ENCODE measurements at regions of chr4 and their contacts with region 1.

Region 1: GRCh38 chr4:2761035-2761923 is 5.1 kb upstream of the TNIP2 start:
- DNase-seq: peak; percentile 61
- ATAC-seq: no peak

Region 2: GRCh38 chr4:2843263-2843940 is 82.1 kb after region 1 on chr4 and contains the start of gene ADD1:
- intact Hi-C with region 1: loop called in 1 of 2 experiments (anchors 10 kb)
- DNase-seq: peak; percentile 91
- ATAC-seq: peak; percentile 98 to 99
- total RNA-seq, gene ADD1: 200 to 209 TPM

Region 3: DNA sequence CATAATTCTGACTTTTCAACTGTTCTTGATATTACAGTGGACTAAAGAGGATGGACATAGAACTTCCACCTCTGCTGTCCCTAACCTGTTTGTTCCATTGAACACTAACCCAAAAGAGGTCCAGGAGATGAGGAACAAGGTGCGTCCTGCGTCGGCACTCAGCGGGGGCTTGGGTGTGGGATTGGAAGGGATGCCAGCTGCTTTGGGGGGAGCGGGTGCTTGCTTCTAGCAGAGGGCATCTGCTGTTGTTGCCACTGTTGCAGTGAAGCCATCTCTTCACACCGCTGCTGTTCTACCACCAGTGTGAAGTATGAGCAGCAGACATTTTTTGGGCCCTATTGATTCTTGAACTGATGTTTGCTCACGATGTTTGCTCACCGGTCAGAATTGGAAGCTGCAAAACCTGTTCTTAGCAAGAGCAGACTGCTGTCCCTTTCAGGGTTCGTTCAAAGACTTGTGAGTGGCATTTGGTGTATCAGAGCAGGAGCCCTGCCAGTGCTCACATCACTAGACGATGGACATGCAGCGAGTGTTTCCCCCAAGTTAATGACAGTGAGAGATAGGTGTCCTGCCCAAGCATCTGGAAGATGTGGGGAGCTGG is 146.5 kb after region 1 on chr4:
- intact Hi-C with region 1: loop called in 1 of 2 experiments (anchors 10 kb)
- DNase-seq: no peak
- ATAC-seq: no peak

Region 4: DNA sequence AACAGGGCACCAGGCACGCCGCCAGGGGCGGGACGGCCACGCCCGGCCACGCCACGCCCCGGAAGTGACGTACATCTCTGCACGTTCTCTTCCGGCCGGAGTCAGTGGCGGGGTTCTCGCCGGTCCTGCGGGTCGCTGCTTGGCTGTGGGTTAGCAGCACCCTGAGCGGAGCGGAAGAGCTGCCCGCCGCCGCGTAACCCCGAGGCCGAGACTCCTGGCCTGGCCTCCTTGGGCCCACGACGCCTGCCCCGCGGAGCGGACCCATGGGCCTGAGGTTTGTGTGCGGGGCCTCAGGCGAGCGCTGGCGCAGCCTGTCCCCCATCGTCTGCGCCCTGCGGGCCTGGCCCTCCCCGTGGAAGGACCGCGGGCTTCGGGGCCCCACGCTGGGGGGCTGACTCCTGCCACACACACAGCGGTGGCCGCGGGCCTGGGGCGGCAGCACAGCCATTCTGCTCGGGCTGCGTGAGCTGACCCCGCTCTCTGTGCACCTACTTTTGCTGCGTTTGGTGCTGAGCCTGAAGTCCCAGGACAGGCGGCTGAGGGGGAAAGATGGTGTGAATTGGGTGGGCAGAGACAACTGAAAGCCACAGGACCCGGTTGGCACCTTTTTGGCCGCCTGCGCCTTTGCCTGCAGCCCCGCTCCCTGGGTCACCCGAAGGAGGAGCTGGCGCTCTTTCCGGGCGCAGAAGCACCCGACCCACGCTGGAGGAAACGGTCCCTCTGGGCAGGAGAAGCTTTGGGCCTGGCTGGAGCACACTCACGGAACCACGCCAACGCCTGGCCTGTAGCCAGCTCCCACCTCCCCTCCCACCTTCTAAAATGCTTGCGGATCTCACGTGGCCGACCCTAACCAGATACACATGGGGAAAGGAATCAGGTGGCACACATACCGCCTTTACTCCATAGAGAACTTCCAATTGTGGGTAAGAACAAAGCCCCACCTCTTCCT is 173.8 kb after region 1 on chr4:
- intact Hi-C with region 1: loop called in 1 of 2 experiments (anchors 10 kb)
- DNase-seq: peak; percentile 97
- ATAC-seq: peak; percentile 82 to 90

Region 5: DNA sequence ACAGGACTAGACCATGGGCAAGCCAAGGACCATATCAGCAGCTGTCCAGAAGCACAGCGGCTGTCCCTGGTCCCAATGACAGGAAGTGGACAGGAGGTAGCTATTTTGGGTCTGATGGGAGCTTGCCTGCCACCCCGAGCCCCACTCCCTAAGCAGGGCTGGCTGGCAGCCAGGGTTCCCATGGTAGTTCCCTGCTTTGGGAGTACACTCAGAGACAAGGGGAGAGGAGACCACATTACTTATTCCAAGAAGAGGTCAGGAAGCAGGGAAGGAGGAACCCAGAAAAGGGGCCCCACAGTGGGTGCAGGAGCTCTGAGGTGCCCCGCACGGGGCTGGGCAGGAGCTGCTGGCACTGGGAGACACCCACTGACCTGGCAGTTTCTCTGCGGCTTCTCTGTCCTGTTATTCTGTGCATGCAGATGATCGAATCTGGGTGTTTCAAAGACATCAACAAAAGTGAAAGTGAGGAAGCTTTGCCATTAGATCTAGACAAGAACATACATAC is 276.7 kb after region 1 on chr4:
- intact Hi-C with region 1: loop called in 1 of 2 experiments (anchors 10 kb)
- DNase-seq: peak; percentile 75
- ATAC-seq: peak; percentile 32 to 56

Measured in left cardiac atrium (tissue), 4 donors.